Breast epithelium (tissue), 4 donors: ENCODE measurements at regions of chr19 and their contacts with region 1.

Region 1: GRCh38 chr19:6556480-6557195 is 25.8 kb downstream of the TNFSF9 start:
- DNase-seq: no peak
- H3K4me3 ChIP-seq: no peak overlapping the region
- H3K27ac ChIP-seq: no peak overlapping the region
- H3K4me1 ChIP-seq: no peaks in the 10 kb centered on the region
- H3K27me3 ChIP-seq: peaks cover 0 to 6% of the 10 kb centered on the region in 2 donors
- CTCF ChIP-seq: no peak
- POLR2A ChIP-seq: no peak

Region 2: GRCh38 chr19:6530386-6531161 is 26.1 kb before region 1 on chr19 and contains the start of gene TNFSF9:
- intact Hi-C with region 1: no loop called
- DNase-seq: peak; percentile 72 to 82
- H3K4me3 ChIP-seq: peak within 1 kb of the TSS; percentile 54 to 75 (median 55)
- H3K27ac ChIP-seq: peak within 1 kb of the TSS; percentile 39 to 43
- H3K4me1 ChIP-seq: no peaks in the 10 kb centered on the region
- H3K27me3 ChIP-seq: peaks cover 0 to 25% of the 10 kb centered on the region in 2 donors
- CTCF ChIP-seq: no peak
- POLR2A ChIP-seq: no peak
- total RNA-seq, gene TNFSF9: 0.33 to 1.6 (median 0.44) TPM

Region 3: DNA sequence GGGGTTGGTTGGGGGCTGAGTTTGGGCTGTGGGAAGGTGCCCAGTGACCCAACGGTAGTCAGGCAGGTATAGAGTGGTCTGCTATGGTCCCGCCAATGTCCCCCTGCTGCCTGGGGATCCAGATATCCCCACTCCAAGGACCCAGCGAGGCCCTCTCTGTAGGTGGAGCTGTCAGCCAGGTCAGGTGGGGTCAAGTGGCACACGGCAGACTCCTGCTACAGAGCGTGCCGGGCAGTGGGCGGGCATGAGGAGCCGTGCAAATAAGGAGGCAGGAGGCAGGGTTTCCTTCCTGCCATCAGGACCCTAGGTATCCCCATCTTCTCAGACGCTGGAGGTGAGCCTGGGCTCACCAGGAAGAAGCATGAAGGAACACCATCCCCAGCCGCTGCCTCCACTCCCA is 1288.3 kb after region 1 on chr19:
- intact Hi-C with region 1: loop called (anchors 5 kb)
- DNase-seq: no peak
- H3K4me3 ChIP-seq: no peak overlapping the region
- H3K27ac ChIP-seq: no peak overlapping the region
- H3K4me1 ChIP-seq: no peaks in the 10 kb centered on the region
- H3K27me3 ChIP-seq: no peaks in the 10 kb centered on the region
- CTCF ChIP-seq: no peak
- POLR2A ChIP-seq: no peak